H1 (cell line): ENCODE measurements at regions of chr11 and their contacts with region 1.

Region 1: GRCh38 chr11:35822815-35823495 is 120.9 kb upstream of the LDLRAD3 start:
- DNase-seq: no peak
- H3K4me3 ChIP-seq: no peak overlapping the region
- H3K27ac ChIP-seq: no peak overlapping the region
- H3K4me1 ChIP-seq: peaks cover 0 to 2% (median 0%) of the 10 kb centered on the region in 4 experiments; a peak in 1 of 7 replicates
- H3K27me3 ChIP-seq: peaks cover 0 to 2% (median 0%) of the 10 kb centered on the region in 4 experiments; a peak in 1 of 7 replicates
- CTCF ChIP-seq: no peak
- EP300 ChIP-seq: no peak
- POLR2A ChIP-seq: no peak
- RAD21 ChIP-seq: no peak

Region 2: DNA sequence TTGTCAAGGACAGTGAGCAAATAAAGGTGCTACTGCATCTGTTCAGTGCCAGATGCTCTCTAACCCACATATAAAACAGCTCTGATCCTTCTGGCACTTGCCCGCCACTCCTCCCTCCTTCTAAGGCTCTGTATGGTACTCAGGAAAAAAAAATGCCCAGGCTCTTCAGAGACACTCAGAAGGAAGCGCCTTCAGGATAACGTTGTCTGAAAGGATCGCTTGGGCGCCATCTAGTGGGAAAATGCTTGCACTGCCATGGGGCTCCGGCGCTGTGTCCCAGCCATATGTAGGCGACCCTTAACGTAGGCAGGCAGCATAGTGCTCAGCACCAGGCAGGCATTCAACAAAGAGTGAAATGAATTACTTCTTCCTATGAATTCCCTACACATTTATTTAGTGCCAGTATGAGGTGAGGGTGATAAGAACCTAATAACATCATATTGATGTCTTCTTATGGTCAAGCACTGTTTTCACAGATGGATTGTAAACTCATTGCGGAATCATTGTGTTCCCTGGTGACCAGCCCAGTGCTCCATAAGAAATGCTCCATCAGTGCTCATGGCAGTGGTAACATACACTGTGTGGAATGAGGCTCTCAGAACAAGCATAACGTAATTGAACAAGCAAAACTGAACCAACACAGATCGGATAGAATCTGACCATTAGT is 337.2 kb before region 1 on chr11:
- CTCF ChIA-PET with region 1: interaction called, 20 read pairs
- POLR2A ChIA-PET with region 1: no interaction called
- DNase-seq: peak; percentile 71 to 95
- H3K4me3 ChIP-seq: no peak overlapping the region
- H3K27ac ChIP-seq: no peak overlapping the region
- H3K4me1 ChIP-seq: no peaks in the 10 kb centered on the region
- H3K27me3 ChIP-seq: no peaks in the 10 kb centered on the region; a peak in 1 of 7 replicates
- CTCF ChIP-seq: peak; percentile 85 to 90 (median 89)
- EP300 ChIP-seq: no peak
- POLR2A ChIP-seq: no peak
- RAD21 ChIP-seq: peak; percentile 80 to 85

Region 3: DNA sequence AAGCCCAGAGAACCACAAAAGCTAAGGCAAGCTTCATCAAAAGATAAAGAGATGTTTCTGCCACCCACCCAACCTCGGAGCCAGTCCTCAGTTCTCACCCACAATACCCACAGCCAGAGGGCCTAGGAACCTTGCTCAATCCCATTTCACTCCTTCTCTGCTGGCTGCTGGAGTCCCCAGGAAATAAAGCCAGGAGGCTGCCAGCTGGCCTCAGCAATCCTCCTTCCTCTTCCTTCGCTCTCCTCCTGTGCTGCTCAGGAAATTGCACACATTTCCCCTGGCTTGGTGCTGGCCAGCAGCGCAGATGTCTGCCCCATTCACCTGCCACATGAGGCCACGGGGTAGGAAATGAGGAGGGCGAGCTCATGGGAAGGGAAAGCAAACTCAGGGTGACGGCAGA is 29.1 kb after region 1 on chr11:
- CTCF ChIA-PET with region 1: interaction called, 15 read pairs
- POLR2A ChIA-PET with region 1: no interaction called
- DNase-seq: no peak
- H3K4me3 ChIP-seq: no peak overlapping the region
- H3K27ac ChIP-seq: no peak overlapping the region
- H3K4me1 ChIP-seq: no peaks in the 10 kb centered on the region
- H3K27me3 ChIP-seq: no peaks in the 10 kb centered on the region
- CTCF ChIP-seq: no peak
- EP300 ChIP-seq: no peak
- POLR2A ChIP-seq: no peak
- RAD21 ChIP-seq: no peak

Region 4: GRCh38 chr11:35969089-35970042 is 146.4 kb after region 1 on chr11:
- CTCF ChIA-PET with region 1: interaction called, 13 read pairs
- POLR2A ChIA-PET with region 1: no interaction called
- DNase-seq: no peak
- H3K4me3 ChIP-seq: no peak overlapping the region
- H3K27ac ChIP-seq: no peak overlapping the region
- H3K4me1 ChIP-seq: peaks cover 0 to 4% (median under 1%) of the 10 kb centered on the region in 4 experiments; a peak in 1 of 7 replicates
- H3K27me3 ChIP-seq: no peaks in the 10 kb centered on the region
- CTCF ChIP-seq: no peak
- EP300 ChIP-seq: no peak
- POLR2A ChIP-seq: no peak
- RAD21 ChIP-seq: no peak

Region 5: GRCh38 chr11:36041988-36042611 is 219.1 kb after region 1 on chr11:
- CTCF ChIA-PET with region 1: interaction called, 21 read pairs
- POLR2A ChIA-PET with region 1: no interaction called
- DNase-seq: no peak
- H3K4me3 ChIP-seq: no peak overlapping the region
- H3K27ac ChIP-seq: no peak overlapping the region
- H3K4me1 ChIP-seq: peaks cover 0 to 9% (median 4%) of the 10 kb centered on the region in 4 experiments; a peak in 3 of 7 replicates
- H3K27me3 ChIP-seq: no peaks in the 10 kb centered on the region
- CTCF ChIP-seq: peak in 2 of 3 experiments; percentile 48 to 52; a peak in 2 of 4 replicates
- EP300 ChIP-seq: no peak
- POLR2A ChIP-seq: no peak
- RAD21 ChIP-seq: peak; percentile 50 to 59

Region 6: DNA sequence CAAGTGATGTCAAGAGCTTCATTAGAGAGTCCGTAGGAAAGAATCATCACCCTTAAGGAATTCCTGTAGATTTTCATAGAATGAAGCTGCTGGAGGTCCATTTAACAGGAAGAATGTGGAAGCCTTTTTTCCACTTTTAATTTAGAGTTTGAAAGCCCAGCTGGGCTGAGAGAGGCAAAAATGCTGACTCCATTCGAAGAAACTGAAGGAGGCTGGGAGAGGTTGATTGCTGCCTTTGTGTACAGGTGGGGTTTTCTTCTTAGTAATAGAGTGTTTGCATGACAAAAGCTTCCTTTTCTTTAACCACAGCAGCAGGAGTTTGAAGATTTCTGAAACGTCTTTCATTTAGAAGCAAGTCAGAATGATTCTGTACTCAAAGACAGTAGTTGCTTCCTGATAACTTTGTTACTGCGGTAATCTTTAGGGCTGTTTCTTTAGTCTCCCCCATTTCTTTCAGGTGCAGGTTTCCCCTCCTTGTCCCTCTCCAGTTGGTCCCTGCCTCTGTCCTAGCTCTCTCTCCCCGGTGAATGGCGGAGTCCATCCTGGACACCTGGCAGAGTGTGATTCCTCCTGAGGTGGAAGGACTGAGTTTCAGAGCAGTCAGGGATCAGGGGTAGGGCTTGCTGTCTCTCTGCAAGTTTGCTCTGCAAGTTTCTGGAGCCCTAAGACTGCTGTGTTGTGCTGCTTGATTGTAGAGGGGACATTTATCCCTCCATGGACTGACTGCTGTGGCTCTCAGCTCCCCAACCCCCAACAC is 287.1 kb after region 1 on chr11:
- CTCF ChIA-PET with region 1: interaction called, 10 read pairs
- POLR2A ChIA-PET with region 1: no interaction called
- DNase-seq: peak in 1 of 2 experiments; percentile 62
- H3K4me3 ChIP-seq: peak overlapping the region in 2 of 4 experiments; percentile 3 to 38; a peak in 3 of 8 replicates
- H3K27ac ChIP-seq: peak overlapping the region; percentile 97
- H3K4me1 ChIP-seq: peaks cover 16 to 37% (median 30%) of the 10 kb centered on the region in 4 experiments
- H3K27me3 ChIP-seq: no peaks in the 10 kb centered on the region
- CTCF ChIP-seq: no peak
- EP300 ChIP-seq: peak in 1 of 2 experiments; percentile 88; a peak in 1 of 3 replicates
- POLR2A ChIP-seq: peak; percentile 18 to 91
- RAD21 ChIP-seq: no peak

Region 7: DNA sequence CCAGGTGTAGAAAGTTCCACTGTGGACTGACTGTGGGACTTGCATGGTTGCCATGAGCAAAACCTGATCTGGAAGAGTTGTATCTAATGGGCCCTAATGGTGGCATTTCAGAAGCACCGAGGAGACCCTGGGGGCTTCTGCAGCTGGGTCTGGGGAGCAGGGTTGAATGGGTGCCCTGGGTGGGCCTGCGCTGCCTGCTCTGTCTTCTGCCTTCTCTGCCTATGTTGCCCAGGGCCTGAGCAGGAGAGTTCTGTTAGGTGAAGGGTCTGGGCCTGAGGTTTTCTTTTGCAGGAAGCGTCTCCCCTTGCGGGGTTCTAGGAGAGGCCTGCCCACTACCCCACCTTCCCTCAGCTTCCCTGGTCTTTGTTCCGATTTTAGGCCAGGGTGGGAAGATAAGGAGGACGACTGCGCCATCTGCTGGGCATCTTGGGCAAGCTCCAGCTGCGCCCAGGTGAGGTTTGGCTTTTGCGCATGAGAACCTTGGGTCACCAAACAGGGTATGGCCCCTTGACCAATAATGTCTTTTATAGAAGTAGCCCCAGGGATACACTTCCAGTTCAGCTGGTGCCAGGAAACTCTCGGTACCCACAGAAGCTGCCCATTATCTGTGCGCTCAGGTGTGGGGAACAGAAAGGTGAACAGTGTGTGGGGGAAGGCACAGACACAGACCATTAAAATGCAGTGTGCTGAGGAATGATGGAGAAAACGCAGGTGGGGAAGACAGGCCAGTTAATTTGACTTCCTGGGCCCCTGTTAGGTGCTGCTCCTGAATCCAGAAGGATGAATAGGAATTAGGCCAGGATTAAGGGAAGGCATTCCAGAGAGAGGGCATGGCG is 443.1 kb after region 1 on chr11:
- CTCF ChIA-PET with region 1: interaction called, 53 read pairs
- POLR2A ChIA-PET with region 1: no interaction called
- DNase-seq: peak; percentile 69 to 88
- H3K4me3 ChIP-seq: no peak overlapping the region
- H3K27ac ChIP-seq: no peak overlapping the region
- H3K4me1 ChIP-seq: peaks cover 0 to 1% (median 0%) of the 10 kb centered on the region in 4 experiments; a peak in 1 of 7 replicates
- H3K27me3 ChIP-seq: 0 out of 7 replicates have a peak, but pooled peaks cover 0 to 2% (median 0%) of the 10 kb centered on the region in 4 experiments
- CTCF ChIP-seq: peak; percentile 92 to 95 (median 94)
- EP300 ChIP-seq: no peak
- POLR2A ChIP-seq: no peak
- RAD21 ChIP-seq: peak; percentile 96 to 97